ENCODE measurements at regions of chr4 and their contacts with region 1.

Region 1: DNA sequence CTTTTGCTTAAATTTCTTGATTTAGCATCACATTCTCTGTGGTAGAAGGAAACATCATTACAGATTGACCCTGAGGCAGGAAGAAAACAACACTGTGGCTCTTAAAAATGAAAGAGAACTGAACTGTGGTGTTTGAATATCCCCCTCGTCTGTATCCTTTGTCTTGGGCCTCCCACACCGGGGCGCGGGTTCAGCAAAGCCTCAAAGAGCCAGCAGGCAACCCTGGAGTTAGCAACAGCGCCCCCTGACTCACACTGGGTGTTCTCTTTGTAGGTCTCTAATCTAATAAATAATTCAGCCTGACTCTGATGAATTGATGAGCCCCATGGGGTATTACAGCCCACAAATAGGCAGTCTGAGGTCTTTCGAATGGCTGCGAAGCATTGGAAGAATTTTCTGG is 46.1 kb upstream of the CTSO start:
- DNase-seq: no peak
- ATAC-seq: no peak
- H3K4me3 ChIP-seq: no peak overlapping the region
- H3K4me3 Mint-ChIP-seq: no peak overlapping the region
- H3K27ac ChIP-seq: no peak overlapping the region
- H3K27ac Mint-ChIP-seq: no peak overlapping the region
- H3K4me1 ChIP-seq: no peaks in the 10 kb centered on the region
- H3K4me1 Mint-ChIP-seq: no peaks in the 10 kb centered on the region
- H3K27me3 ChIP-seq: no peaks in the 10 kb centered on the region
- H3K27me3 Mint-ChIP-seq: no peaks in the 10 kb centered on the region
- CTCF ChIP-seq: no peak

Region 2: GRCh38 chr4:156038772-156039171 is 39.0 kb after region 1 on chr4:
- intact Hi-C with region 1: loop called (anchors 1 kb)
- DNase-seq: no peak
- ATAC-seq: no peak
- H3K4me3 ChIP-seq: no peak overlapping the region
- H3K4me3 Mint-ChIP-seq: no peak overlapping the region
- H3K27ac ChIP-seq: no peak overlapping the region
- H3K27ac Mint-ChIP-seq: no peak overlapping the region
- H3K4me1 ChIP-seq: no peaks in the 10 kb centered on the region
- H3K4me1 Mint-ChIP-seq: no peaks in the 10 kb centered on the region
- H3K27me3 ChIP-seq: no peaks in the 10 kb centered on the region
- H3K27me3 Mint-ChIP-seq: no peaks in the 10 kb centered on the region
- CTCF ChIP-seq: no peak

Measured in natural killer cell (primary cell).